MCF 10A (cell line): ENCODE measurements at regions of chr7 and their contacts with region 1.

Region 1: DNA sequence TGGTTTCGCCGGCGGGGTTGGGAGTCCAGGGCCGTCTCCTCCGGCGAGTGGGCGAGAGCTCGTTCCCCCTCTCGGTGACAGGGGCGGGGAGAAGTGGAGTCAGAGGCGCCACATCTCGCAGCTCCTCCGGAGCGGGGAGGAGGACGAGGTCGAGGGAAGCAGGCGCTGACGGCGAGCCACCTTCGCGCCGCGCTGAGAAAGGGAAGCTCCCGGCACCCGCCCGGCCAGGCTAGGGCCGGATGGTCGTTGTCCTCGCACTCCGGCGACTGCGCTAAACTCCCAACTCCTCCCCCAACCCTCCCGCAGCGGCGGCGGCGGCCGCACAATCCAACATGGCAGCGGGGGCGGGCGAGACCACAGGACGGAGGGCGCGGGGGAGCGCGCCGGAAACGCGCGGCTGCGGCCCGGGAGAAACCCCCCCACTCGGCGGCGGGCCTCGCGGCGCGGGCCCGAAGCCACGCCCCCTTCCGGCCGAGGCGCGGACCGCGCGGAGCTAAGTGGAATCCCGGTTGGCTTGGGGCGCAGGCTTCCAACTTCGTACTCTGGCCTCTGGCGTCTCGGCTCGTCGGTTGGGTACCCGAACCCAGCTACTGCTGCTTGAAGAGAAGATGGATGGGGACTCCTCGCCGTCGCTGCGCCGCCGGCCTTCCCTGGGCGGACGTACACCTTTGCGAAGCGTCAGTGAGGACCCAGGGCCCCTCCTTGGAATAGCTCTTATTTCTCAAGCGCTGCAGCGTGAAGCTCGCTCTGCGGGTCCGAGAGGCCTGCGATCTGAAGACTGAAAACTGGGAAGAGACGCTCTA is at the start of gene WASL:
- DNase-seq: peak; percentile 87
- H3K4me3 Mint-ChIP-seq: peak within 1 kb of the TSS; percentile 98
- H3K27ac Mint-ChIP-seq: peak within 1 kb of the TSS; percentile 99
- H3K4me1 Mint-ChIP-seq: peaks cover 44% of the 10 kb centered on the region
- H3K27me3 Mint-ChIP-seq: no peaks in the 10 kb centered on the region
- CTCF ChIP-seq: no peak
- total RNA-seq, gene WASL: 34.7 and 38.8 TPM in 2 replicates

Region 2: DNA sequence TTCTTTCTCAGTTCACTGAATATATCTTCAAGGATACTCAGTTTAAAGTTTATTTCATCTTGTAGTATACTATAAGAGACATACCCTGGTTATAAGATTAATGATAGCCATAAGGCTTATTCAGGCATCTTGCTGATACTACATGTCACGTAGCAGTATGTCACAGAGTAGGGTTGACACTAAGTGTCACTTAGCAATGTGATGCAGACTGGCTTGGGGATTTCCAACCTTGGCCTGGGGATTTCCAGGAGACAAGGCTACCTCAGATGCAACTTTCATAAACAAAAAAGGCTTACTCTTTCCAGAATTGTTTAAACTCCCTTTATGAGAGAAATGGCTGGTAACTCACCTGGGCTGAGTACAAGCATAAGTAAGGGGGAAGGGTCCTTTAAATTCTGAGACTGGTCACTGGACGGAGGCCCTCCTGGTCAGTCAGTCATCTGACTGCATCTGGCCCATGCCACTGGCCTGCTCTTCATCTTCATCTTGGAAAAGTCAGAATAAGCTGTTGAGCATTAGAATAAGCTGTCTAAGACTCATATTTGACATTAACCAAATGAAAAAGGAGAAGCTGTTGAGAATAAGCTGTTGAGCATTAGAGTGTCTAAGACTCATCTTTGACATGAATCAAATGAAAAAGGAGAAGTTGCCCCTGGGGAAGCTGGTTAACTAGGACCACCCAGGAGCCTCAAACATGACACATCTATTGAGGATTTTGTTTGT is 558.7 kb before region 1 on chr7:
- CTCF ChIA-PET with region 1: no interaction called
- POLR2A ChIA-PET with region 1: no interaction called
- intact Hi-C with region 1: no loop called
- DNase-seq: no peak
- H3K4me3 Mint-ChIP-seq: no peak overlapping the region
- H3K27ac Mint-ChIP-seq: no peak overlapping the region
- H3K4me1 Mint-ChIP-seq: no peaks in the 10 kb centered on the region
- H3K27me3 Mint-ChIP-seq: peaks cover 18% of the 10 kb centered on the region
- CTCF ChIP-seq: no peak

Region 3: DNA sequence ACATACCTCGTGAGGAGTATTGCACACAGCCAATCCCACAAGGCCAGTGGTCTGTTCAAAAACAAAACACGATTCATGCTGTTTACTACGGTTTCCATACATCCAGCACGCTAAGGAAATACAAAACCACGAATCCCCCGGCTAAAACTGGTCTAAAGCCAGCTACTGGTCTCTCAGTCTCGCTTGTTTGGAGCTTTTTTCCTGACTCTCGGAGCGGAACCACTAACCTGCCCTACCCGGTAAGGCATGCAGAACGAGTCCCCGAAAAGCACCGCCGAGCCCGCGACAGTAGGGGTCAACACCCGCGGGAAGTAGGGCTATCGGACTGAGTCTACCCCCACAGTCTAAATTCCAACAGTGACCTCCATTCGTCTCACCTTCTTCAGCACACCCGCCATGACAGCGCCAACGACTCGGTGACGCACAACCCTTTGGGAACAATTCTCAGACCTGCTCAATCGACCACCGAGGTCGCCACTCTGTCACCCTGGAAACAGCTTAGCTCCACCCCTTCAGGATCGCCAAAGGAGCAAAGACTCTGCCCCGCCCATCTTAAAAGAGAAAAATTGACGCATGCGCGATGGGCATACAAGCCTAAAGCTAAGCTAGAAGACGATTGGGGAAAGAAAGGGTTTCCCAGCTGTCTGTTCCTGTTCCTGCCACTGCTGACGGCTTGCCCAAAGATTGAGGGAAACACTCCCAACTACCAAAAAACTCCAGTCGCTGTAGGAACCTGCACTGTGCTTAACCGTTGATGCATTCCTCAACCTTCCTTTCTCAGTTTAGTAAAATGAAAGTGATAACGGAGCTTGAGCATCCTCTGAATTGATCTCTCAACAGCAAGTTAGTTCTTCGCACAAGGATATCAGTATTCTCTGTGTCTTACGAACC is 191.3 kb before region 1 on chr7 and contains the start of gene NDUFA5:
- CTCF ChIA-PET with region 1: no interaction called
- POLR2A ChIA-PET with region 1: interaction called, 13 read pairs
- intact Hi-C with region 1: no loop called
- DNase-seq: peak; percentile 99
- H3K4me3 Mint-ChIP-seq: no peak within 1 kb of the TSS
- H3K27ac Mint-ChIP-seq: no peak within 1 kb of the TSS
- H3K4me1 Mint-ChIP-seq: peaks cover 5% of the 10 kb centered on the region
- H3K27me3 Mint-ChIP-seq: no peaks in the 10 kb centered on the region
- CTCF ChIP-seq: no peak
- total RNA-seq, gene NDUFA5: 71.9 and 72.8 TPM in 2 replicates

Region 4: GRCh38 chr7:123674399-123675180 is 74.3 kb before region 1 on chr7:
- CTCF ChIA-PET with region 1: no interaction called
- POLR2A ChIA-PET with region 1: interaction called, 21 read pairs
- intact Hi-C with region 1: no loop called
- DNase-seq: peak; percentile 70
- H3K4me3 Mint-ChIP-seq: no peak overlapping the region
- H3K27ac Mint-ChIP-seq: peak overlapping the region; percentile 46
- H3K4me1 Mint-ChIP-seq: peaks cover 21% of the 10 kb centered on the region
- H3K27me3 Mint-ChIP-seq: no peaks in the 10 kb centered on the region
- CTCF ChIP-seq: no peak

Region 5: GRCh38 chr7:123709525-123709924 is 39.4 kb before region 1 on chr7:
- CTCF ChIA-PET with region 1: interaction called, 3 read pairs
- POLR2A ChIA-PET with region 1: interaction called, 31 read pairs
- intact Hi-C with region 1: no loop called
- DNase-seq: no peak
- H3K4me3 Mint-ChIP-seq: no peak overlapping the region
- H3K27ac Mint-ChIP-seq: no peak overlapping the region
- H3K4me1 Mint-ChIP-seq: peaks cover 16% of the 10 kb centered on the region
- H3K27me3 Mint-ChIP-seq: no peaks in the 10 kb centered on the region
- CTCF ChIP-seq: no peak

Region 6: DNA sequence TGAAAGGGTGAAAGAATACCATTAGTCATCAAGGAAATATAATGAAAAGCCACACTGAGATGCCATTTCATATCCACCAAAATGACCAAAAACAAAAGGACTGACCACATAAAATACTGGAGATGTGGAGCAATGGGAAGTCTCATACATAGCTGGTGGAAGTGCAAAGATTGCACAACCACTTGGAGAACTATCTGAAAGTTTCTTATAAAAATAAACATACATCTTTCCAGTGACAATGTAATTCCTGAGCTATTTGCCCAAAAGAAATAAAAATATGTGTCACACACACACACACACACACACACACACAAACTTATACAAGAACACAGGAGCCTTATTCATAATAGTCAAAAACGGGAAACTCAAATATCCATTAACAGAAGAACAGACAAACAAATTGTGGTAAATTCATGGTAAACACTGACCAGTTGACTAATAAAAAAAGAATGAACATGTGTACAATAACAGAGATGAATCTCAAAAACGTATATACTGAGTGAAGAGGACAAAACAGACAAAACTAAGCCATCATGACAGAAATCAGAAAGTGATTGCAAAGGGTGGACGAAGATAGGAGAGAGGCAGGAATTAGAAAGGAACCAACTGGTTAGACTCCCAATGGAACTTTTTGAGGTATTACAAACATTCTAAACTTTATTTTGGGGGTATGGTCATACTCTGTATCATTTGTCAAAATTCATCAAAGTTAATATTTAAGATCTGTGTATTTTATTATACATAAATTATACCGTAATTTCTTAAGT is 21.7 kb before region 1 on chr7:
- CTCF ChIA-PET with region 1: interaction called, 6 read pairs
- POLR2A ChIA-PET with region 1: interaction called, 28 read pairs
- intact Hi-C with region 1: no loop called
- DNase-seq: peak; percentile 86
- H3K4me3 Mint-ChIP-seq: peak overlapping the region; percentile 5
- H3K27ac Mint-ChIP-seq: peak overlapping the region; percentile 20
- H3K4me1 Mint-ChIP-seq: peaks cover 17% of the 10 kb centered on the region
- H3K27me3 Mint-ChIP-seq: no peaks in the 10 kb centered on the region
- CTCF ChIP-seq: no peak

Region 7: GRCh38 chr7:123770378-123770777 is 21.4 kb after region 1 on chr7:
- CTCF ChIA-PET with region 1: interaction called, 24 read pairs
- POLR2A ChIA-PET with region 1: interaction called, 367 read pairs
- intact Hi-C with region 1: loop called (anchors 1 kb)
- DNase-seq: peak; percentile 97
- H3K4me3 Mint-ChIP-seq: peak overlapping the region; percentile 67
- H3K27ac Mint-ChIP-seq: peak overlapping the region; percentile 93
- H3K4me1 Mint-ChIP-seq: peaks cover 38% of the 10 kb centered on the region
- H3K27me3 Mint-ChIP-seq: no peaks in the 10 kb centered on the region
- CTCF ChIP-seq: no peak

Region 8: DNA sequence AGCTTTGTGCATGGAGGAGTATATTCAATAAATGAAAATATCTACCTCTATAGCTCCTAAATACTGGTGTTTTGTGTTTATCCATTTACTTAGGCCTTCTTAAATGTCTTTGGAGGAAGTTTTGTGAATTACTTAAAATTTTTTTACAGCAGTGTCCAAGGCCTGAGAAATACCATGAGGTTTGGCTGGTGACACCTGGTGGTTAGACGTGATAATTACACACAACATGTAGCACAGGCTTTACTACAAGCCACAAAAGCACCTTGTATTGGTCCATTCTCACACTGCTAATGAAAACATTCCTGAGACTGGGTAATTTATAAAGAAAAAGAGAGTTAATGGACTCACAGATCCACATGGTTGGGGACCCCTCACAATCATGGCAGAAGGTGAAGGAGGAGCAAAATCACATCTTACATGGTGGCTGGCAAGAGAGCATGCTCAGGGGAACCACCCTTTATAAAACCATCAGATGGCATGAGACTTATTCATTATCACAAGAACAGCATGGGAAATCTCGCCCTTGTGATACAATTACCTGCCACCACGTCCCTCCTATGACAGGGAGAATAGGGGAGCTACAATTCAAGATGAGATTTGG is 116.7 kb after region 1 on chr7:
- CTCF ChIA-PET with region 1: interaction called, 16 read pairs
- POLR2A ChIA-PET with region 1: interaction called, 10 read pairs
- intact Hi-C with region 1: no loop called
- DNase-seq: peak; percentile 79
- H3K4me3 Mint-ChIP-seq: no peak overlapping the region
- H3K27ac Mint-ChIP-seq: no peak overlapping the region
- H3K4me1 Mint-ChIP-seq: peaks cover 11% of the 10 kb centered on the region
- H3K27me3 Mint-ChIP-seq: no peaks in the 10 kb centered on the region
- CTCF ChIP-seq: peak; percentile 59